HepG2 (cell line): ENCODE measurements at regions of chr6 and their contacts with region 1.

Region 1: DNA sequence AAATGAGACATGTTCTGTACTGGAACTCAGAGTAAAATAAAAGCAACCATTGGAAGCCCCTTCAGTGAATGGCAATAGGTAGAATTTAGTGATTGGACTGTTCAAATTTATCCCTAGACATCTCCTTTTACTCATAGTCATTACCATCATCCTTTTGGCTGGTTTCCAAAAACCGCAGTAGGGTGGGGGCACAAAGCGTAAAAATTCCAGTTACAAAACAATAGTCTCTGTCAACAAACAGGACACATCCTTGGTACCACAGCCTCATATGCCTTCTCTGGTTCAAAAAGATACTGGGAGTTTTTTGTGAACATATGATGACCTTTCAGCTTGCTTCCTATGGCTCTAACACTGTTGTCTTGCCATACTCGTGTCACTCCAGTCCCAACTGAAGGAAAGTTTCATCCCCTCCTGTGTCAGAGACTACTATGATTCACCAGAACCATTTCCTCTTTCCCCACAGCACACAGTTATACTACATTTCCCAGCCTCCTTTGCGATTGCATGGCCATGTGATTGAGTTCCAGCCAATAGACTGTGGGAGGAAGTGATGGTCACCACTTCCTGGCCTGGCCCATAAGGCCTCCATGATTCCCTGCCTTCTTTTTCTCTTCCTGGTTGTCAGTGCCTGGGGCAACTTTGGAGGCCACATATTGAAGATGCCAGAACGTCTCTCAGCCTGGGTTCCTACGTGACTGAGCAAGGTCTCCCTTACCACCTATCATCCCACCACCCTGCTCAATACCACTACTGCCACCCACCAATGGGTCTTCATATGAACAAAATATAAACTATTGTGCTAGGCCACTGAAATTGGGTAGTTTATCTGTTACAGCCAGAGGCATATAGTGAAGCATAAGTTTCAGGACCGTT is 162.4 kb downstream of the ID4 start:
- DNase-seq: no peak
- ATAC-seq: no peak; the same call in 2 of the 3 replicates
- H3K4me3 ChIP-seq: no peak overlapping the region
- H3K27ac ChIP-seq: no peak overlapping the region
- H3K4me1 ChIP-seq: no peaks in the 10 kb centered on the region
- H3K27me3 ChIP-seq: no peaks in the 10 kb centered on the region; a peak in 1 of 5 replicates
- CTCF ChIP-seq: no peak
- EP300 ChIP-seq: no peak
- POLR2A ChIP-seq: no peak
- RAD21 ChIP-seq: no peak

Region 2: DNA sequence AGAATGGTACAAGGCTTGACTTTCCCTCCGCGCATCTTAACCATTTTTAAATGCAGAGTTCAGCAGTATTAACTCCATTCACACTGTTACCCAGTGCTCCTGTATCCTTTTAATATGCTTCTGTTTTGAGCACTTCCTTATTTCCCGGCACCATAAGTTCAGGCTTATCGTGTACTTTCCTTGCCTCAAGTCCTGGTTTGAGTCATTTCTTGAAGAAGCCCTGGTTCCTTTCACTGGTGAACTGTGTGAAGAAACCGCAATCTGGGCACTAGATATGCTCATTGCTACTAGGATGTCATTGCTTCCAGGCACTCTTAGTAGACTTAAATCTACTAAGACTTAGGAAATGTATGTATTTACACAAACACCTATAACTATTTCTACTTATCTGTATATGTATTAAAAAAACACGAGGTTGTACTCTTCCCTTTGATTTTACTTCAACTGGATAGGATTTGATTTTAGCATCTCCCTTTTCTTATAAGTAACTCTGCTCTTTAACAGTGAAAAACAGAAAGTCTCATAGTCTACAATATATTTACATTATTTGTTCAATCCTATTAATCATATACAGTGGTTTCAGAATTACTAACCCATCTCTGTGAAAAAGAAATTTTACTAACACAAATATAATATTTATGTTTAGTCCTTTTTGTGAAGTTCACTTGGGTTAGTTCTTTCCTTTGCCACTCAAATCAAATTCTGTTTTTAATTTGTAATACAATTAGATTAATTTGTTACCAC is 670.2 kb after region 1 on chr6:
- CTCF ChIA-PET with region 1: no interaction called
- POLR2A ChIA-PET with region 1: no interaction called
- in situ Hi-C with region 1: no loop called
- intact Hi-C with region 1: loop called (anchors 10 kb)
- DNase-seq: no peak
- ATAC-seq: no peak
- H3K4me3 ChIP-seq: no peak overlapping the region
- H3K27ac ChIP-seq: no peak overlapping the region
- H3K4me1 ChIP-seq: no peaks in the 10 kb centered on the region
- H3K27me3 ChIP-seq: no peaks in the 10 kb centered on the region
- CTCF ChIP-seq: no peak
- EP300 ChIP-seq: no peak
- POLR2A ChIP-seq: no peak
- RAD21 ChIP-seq: no peak